ENCODE measurements at regions of chr6 and their contacts with region 1.

Region 1: GRCh38 chr6:122459213-122459612 is 12.4 kb downstream of the SERINC1 start:
- DNase-seq: no peak
- H3K4me3 ChIP-seq: no peak overlapping the region
- H3K27ac ChIP-seq: no peak overlapping the region
- H3K4me1 ChIP-seq: peaks cover 10 to 18% of the 10 kb centered on the region in 2 donors
- H3K27me3 ChIP-seq: no peaks in the 10 kb centered on the region
- CTCF ChIP-seq: no peak
- POLR2A ChIP-seq: no peak

Region 2: DNA sequence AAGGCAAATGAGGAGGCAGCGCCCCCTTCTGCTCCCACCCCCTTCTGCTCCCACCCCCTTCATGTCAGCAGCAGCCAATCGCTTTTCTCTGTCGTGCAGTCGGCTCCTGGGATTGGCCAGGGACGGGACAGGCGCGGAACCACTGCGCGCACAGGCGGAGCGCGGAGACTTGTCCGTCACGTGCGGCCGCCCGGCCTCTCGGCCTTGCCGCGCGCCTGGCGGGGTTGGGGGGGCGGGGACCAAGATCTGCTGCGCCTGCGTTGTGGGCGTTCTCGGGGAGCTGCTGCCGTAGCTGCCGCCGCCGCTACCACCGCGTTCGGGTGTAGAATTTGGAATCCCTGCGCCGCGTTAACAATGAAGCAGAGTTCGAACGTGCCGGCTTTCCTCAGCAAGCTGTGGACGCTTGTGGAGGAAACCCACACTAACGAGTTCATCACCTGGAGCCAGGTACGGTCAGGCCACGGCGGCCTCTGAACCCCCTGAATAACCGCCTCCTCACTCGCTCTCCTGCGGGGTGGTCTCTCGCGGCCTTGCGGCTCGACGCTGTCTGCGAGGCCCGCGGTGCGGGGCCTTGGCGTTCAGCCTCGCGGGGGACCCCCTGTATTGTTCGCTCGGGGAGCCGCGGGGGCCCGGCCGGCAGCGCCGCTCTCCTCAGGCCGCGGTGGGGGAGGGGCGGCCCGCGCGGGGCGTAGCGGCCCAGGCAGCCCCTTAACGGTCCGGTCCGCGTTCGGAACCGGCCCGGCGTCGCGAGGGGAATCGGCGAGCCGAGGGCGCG is 59.6 kb before region 1 on chr6 and contains the start of gene HSF2:
- intact Hi-C with region 1: loop called (anchors 10 kb)
- DNase-seq: peak; percentile 97
- H3K4me3 ChIP-seq: peak within 1 kb of the TSS; percentile 74 to 99 (median 78)
- H3K27ac ChIP-seq: peak within 1 kb of the TSS; percentile 68 to 87 (median 80)
- H3K4me1 ChIP-seq: peaks cover 0 to 11% of the 10 kb centered on the region in 2 donors
- H3K27me3 ChIP-seq: no peaks in the 10 kb centered on the region
- CTCF ChIP-seq: peak in 3 of 6 experiments; percentile 0 to 25 (median 9)
- POLR2A ChIP-seq: peak in 1 of 2 donors; percentile 68
- total RNA-seq, gene HSF2: 14.0 to 28.8 (median 20.1) TPM

Measured in thyroid gland (tissue), 4 donors.